ENCODE measurements at regions of chr10 and their contacts with region 1.

Region 1: DNA sequence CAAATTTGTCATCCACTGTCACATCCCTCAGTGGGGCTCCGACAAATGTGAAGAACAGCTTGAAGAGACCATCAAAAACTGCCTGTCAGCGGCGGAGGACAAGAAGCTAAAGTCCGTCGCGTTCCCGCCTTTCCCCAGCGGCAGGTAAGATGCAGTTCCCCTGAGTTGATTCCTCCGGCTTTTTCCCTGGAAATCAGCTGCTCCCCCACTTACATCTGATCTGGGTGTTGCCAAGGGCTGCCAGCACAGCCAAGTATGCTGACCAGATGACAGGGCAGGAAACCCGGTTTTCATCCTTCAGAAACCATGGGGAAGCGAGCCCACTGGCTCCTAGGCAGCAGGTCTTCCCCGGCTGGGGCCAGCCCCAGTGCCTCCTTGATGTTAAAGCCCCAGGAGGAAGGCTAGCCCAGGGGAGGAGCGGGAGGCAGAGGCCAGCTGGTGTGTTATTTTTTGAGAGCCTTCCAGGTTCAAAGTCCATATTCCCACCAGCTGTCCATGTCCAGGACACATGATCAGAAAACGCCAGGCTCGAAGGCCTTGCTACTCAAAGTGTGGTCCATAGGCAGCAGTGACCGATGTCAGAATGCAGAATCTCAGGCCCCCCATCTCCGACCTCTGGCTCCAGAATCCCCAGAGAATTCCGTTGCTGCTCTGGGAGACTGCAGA is 23.4 kb downstream of the AIFM2 start:
- DNase-seq: peak; percentile 57
- ATAC-seq: peak; percentile 70
- H3K4me3 ChIP-seq: no peak overlapping the region
- H3K27ac ChIP-seq: peak overlapping the region; percentile 45
- H3K4me1 ChIP-seq: peaks cover 23% of the 10 kb centered on the region
- H3K27me3 ChIP-seq: no peaks in the 10 kb centered on the region; a peak in 1 of 5 replicates
- CTCF ChIP-seq: peak; percentile 12; the same call in 1 of the 2 replicates
- EP300 ChIP-seq: peak in 1 of 2 experiments; percentile 81; a peak in 2 of 4 replicates
- POLR2A ChIP-seq: peak in 1 of 2 experiments; percentile 30; a peak in 1 of 4 replicates
- RAD21 ChIP-seq: no peak

Region 2: DNA sequence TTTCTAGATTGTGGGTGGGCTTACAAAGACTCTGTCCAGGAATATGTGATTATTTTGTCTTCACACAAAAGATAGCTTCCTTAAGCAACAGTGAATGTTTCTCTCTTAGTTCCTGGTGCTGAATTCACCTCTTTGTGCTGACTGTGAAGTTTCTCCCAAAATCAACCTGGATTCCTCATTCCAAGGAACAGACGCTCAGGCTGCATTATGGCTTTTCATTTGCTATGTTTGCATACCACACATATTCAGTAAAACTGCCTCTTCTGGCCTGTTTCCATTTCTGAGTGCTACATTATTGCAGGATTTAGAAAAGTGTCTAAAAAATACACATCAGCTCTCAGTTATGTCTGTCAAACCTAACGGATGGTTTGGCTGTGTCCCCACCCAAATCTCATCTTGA is 35.0 kb before region 1 on chr10:
- CTCF ChIA-PET with region 1: no interaction called
- POLR2A ChIA-PET with region 1: no interaction called
- in situ Hi-C with region 1: no loop called
- intact Hi-C with region 1: no loop called
- DNase-seq: no peak
- ATAC-seq: no peak
- H3K4me3 ChIP-seq: no peak overlapping the region
- H3K27ac ChIP-seq: no peak overlapping the region
- H3K4me1 ChIP-seq: no peaks in the 10 kb centered on the region
- H3K27me3 ChIP-seq: no peaks in the 10 kb centered on the region
- CTCF ChIP-seq: no peak
- EP300 ChIP-seq: no peak
- POLR2A ChIP-seq: no peak
- RAD21 ChIP-seq: no peak

Region 3: DNA sequence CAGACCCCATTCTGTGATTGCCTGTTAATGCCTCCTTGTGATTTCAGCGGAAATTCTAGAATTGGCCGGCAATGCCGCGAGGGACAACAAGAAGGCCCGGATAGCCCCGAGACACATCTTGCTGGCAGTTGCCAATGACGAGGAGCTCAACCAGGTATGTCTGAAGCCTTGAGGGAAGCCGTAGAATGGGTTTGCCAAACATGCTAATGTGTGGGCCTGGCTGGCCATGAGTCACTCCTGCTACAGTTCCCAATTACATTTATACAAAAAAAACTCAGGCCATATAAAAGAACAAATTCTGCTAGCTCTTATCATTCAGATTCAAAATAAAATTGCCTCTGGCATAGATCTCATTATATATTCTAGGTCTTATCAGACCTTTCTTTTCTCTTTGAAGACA is 19.2 kb before region 1 on chr10:
- CTCF ChIA-PET with region 1: no interaction called
- POLR2A ChIA-PET with region 1: interaction called, 16 read pairs
- in situ Hi-C with region 1: no loop called
- intact Hi-C with region 1: no loop called
- DNase-seq: no peak
- ATAC-seq: no peak
- H3K4me3 ChIP-seq: no peak overlapping the region
- H3K27ac ChIP-seq: peak overlapping the region; percentile 79
- H3K4me1 ChIP-seq: peaks cover 97% of the 10 kb centered on the region
- H3K27me3 ChIP-seq: no peaks in the 10 kb centered on the region
- CTCF ChIP-seq: no peak
- EP300 ChIP-seq: no peak
- POLR2A ChIP-seq: no peak
- RAD21 ChIP-seq: no peak

Region 4: DNA sequence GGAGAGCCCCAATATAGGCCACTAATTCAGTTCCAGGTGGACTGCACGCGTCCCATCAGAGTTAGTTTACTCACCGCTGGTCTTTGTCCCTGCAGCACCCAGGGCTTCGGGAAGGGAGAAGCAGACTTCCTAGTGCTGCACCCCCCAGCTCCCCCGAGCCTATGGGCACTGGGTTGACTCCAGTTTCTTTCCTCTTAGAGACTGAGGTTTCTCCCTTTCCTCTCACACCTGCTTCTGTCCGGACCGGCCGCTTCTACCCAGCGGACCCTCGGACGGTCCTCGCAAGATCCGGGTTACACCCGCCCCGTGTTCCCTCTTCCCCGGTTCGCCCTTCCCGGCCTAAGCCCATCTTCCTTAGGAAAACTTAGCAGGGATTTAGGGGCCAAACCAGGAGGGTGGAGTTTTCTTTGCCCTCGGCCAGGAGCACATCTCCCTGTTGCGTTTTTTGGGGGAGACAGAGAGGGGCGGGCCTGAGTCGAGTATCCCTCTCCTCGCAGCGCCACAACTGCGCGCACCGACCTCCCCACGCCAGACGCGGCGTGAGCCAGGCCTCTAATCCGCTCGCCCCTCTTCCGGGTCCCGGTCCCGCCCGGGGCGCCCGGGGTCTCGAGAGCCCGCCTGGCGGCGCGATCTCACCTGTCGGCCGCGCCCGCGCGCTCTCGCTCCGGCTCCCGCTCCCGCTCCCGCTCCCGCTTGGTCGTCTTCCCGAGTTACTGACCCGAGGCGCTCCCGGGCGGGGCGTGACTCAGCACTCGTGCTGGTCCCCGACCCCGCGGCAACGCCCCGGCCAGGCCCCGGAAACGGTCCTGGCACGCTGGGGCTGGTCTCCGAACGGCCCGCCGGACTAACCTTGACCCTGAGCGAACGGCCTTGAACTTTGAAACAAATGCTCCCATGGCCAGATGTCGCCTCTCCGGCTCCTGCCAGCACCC is 23.2 kb after region 1 on chr10 and contains the start of gene AIFM2:
- CTCF ChIA-PET with region 1: no interaction called
- POLR2A ChIA-PET with region 1: interaction called, 10 read pairs
- in situ Hi-C with region 1: no loop called
- intact Hi-C with region 1: no loop called
- DNase-seq: peak; percentile 80
- ATAC-seq: peak; percentile 81
- H3K4me3 ChIP-seq: peak within 1 kb of the TSS; percentile 77 to 97 (median 94)
- H3K27ac ChIP-seq: peak within 1 kb of the TSS; percentile 97
- H3K4me1 ChIP-seq: peaks cover 62% of the 10 kb centered on the region
- H3K27me3 ChIP-seq: no peaks in the 10 kb centered on the region; a peak in 1 of 5 replicates
- CTCF ChIP-seq: no peak; the same call in none of the 2 replicates
- EP300 ChIP-seq: peak in 1 of 2 experiments; percentile 78; a peak in 2 of 4 replicates
- POLR2A ChIP-seq: peak; percentile 53 to 71; a peak in 3 of 4 replicates
- RAD21 ChIP-seq: peak; percentile 53
- total RNA-seq, gene AIFM2: 20.3 and 29.6 TPM in 2 replicates

Region 5: GRCh38 chr10:70178139-70178725 is 69.0 kb after region 1 on chr10:
- CTCF ChIA-PET with region 1: no interaction called
- POLR2A ChIA-PET with region 1: no interaction called
- in situ Hi-C with region 1: no loop called
- intact Hi-C with region 1: no loop called
- DNase-seq: no peak
- ATAC-seq: no peak
- H3K4me3 ChIP-seq: no peak overlapping the region
- H3K27ac ChIP-seq: no peak overlapping the region
- H3K4me1 ChIP-seq: peaks cover 21% of the 10 kb centered on the region
- H3K27me3 ChIP-seq: no peaks in the 10 kb centered on the region
- CTCF ChIP-seq: no peak
- EP300 ChIP-seq: no peak
- POLR2A ChIP-seq: no peak
- RAD21 ChIP-seq: no peak

Measured in HepG2 (cell line).